ENCODE measurements at regions of chr16 and their contacts with region 1.

Region 1: GRCh38 chr16:1533443-1533951 is at the start of gene TMEM204:
- DNase-seq: peak; percentile 95
- H3K4me3 ChIP-seq: peak within 1 kb of the TSS; percentile 54 to 70 (median 59)
- H3K27ac ChIP-seq: peak within 1 kb of the TSS; percentile 83 to 89 (median 88)
- H3K4me1 ChIP-seq: peaks cover 0 to 83% (median 77%) of the 10 kb centered on the region in 4 donors
- H3K27me3 ChIP-seq: no peaks in the 10 kb centered on the region
- CTCF ChIP-seq: no peak
- EP300 ChIP-seq: no peak
- POLR2A ChIP-seq: peak; percentile 31 to 32
- total RNA-seq, gene TMEM204: 38.0 to 46.0 (median 42.3) TPM

Region 2: GRCh38 chr16:1420111-1420540 is 113.4 kb before region 1 on chr16:
- intact Hi-C with region 1: loop called (anchors 5 kb)
- DNase-seq: no peak
- H3K4me3 ChIP-seq: peak overlapping the region; percentile 74 to 98 (median 92)
- H3K27ac ChIP-seq: peak overlapping the region; percentile 91 to 95 (median 94)
- H3K4me1 ChIP-seq: peaks cover 0 to 36% (median 20%) of the 10 kb centered on the region in 4 donors
- H3K27me3 ChIP-seq: no peaks in the 10 kb centered on the region
- CTCF ChIP-seq: no peak
- EP300 ChIP-seq: no peak
- POLR2A ChIP-seq: no peak

Region 3: DNA sequence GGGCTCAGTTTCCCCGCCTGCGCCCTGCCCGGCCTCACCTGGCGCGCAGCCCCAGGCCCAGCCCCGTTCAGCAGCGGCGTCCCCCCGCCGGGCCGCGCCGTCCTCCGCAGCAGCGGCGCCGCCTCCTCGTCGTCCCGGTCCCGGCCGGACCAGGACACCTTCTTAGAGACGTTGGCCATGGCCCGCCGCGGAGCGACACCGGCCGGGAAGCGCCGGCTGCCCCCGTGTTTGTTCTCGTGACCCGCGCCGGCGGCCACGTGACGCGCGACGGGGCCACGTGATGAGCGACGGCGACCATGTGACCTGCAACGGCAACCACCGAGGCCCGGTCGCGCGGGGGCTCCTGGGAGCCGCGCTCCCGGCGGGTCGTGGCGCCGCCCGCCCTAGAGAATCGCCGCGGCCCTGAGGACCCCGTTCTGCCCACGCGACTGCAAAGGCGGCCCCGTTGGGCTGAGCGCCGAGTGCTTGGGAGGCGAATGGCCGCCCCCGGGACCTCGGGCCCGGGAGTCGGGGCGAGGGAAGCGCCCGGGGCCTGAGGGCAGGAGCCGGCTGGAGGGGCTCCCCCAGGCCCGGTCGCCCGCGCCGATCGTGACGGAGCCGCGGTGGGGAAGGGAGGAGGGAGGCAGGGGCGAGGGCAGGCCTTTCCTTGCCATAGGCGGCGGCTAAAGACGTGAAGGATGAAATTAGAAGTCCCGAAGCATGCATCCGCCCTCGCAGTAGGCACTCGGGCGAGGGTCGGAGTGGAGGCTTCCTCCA is 58.5 kb before region 1 on chr16 and contains the start of gene CLCN7:
- intact Hi-C with region 1: loop called (anchors 1 kb)
- DNase-seq: peak; percentile 96
- H3K4me3 ChIP-seq: peak within 1 kb of the TSS; percentile 60 to 92 (median 84)
- H3K27ac ChIP-seq: peak within 1 kb of the TSS; percentile 86 to 94 (median 92)
- H3K4me1 ChIP-seq: peaks cover 0 to 42% (median 34%) of the 10 kb centered on the region in 4 donors
- H3K27me3 ChIP-seq: no peaks in the 10 kb centered on the region
- CTCF ChIP-seq: no peak
- EP300 ChIP-seq: peak in 2 of 4 donors; percentile 37 to 72
- POLR2A ChIP-seq: peak; percentile 52 to 89
- total RNA-seq, gene CLCN7: 31.0 to 78.7 (median 42.2) TPM

Region 4: GRCh38 chr16:1579201-1579600 is 45.7 kb after region 1 on chr16:
- intact Hi-C with region 1: no loop called
- DNase-seq: no peak
- H3K4me3 ChIP-seq: no peak overlapping the region
- H3K27ac ChIP-seq: no peak overlapping the region
- H3K4me1 ChIP-seq: no peaks in the 10 kb centered on the region
- H3K27me3 ChIP-seq: no peaks in the 10 kb centered on the region
- CTCF ChIP-seq: no peak
- EP300 ChIP-seq: no peak
- POLR2A ChIP-seq: no peak

Region 5: GRCh38 chr16:1610276-1611017 is 77.0 kb after region 1 on chr16:
- intact Hi-C with region 1: loop called (anchors 2 kb)
- DNase-seq: peak; percentile 94
- H3K4me3 ChIP-seq: peak overlapping the region; percentile 75 to 92 (median 86)
- H3K27ac ChIP-seq: peak overlapping the region; percentile 84 to 93 (median 87)
- H3K4me1 ChIP-seq: peaks cover 0 to 46% (median 37%) of the 10 kb centered on the region in 4 donors
- H3K27me3 ChIP-seq: no peaks in the 10 kb centered on the region
- CTCF ChIP-seq: no peak
- EP300 ChIP-seq: peak in 1 of 4 donors; percentile 11
- POLR2A ChIP-seq: no peak

Measured in sigmoid colon (tissue), 7 donors.